B cell (primary cell): ENCODE measurements at regions of chr15 and their contacts with region 1.

Region 1: GRCh38 chr15:68578174-68578979 is 416 bp upstream of the CORO2B start:
- DNase-seq: peak; percentile 80
- ATAC-seq: peak; percentile 72
- H3K4me3 ChIP-seq: peak overlapping the region; percentile 54 to 77 (median 67)
- H3K4me3 Mint-ChIP-seq: peak overlapping the region; percentile 93
- H3K27ac ChIP-seq: peak overlapping the region; percentile 72 to 75
- H3K27ac Mint-ChIP-seq: peak overlapping the region; percentile 78
- H3K4me1 ChIP-seq: peaks cover 31 to 35% of the 10 kb centered on the region in 2 donors
- H3K4me1 Mint-ChIP-seq: peaks cover 44% of the 10 kb centered on the region
- H3K27me3 ChIP-seq: peaks cover 0 to 22% (median 3%) of the 10 kb centered on the region in 4 experiments
- H3K27me3 Mint-ChIP-seq: peaks cover 32% of the 10 kb centered on the region
- CTCF ChIP-seq: peak; percentile 49

Region 2: DNA sequence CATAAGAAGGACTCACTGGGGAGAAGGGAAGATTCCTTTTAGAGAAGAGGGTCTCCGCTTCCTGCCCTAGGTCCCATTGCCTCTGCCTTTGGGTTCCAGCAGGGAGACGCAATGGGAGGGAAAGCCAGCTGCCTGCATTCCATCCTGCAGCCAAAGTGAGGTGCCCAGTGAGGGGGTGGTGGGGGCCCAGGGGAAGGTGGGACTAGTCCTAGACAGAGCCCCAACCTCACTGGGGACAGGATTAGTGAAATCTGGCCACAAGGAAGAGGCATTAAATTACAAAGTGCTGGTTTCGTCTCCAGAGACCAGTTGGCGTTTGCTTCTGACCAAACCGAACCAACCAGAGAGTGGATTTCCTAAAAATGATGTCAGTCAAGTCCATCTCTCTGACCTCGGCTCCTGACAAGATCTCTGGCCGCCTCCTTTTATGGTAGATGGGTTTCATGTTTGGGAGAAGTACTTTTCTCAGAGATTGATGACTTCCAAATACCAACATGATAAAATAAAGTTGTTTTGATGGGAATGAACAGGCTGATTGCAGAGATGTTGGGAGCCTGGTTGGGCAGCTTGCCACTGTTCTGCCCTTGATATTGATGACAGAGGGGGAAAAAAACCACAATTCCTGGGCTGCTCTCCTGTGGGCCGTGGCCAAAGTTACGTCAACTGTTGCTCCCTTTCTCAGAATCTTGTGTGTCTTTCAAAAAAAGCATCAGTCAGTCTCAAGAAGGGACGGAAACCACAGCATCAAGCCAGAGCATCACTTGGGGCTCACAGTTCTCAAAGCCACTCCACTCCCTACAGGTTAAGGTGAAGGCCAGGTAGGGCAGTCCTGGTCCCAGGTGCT is 171.1 kb before region 1 on chr15:
- CTCF ChIA-PET with region 1: no interaction called
- POLR2A ChIA-PET with region 1: no interaction called
- intact Hi-C with region 1: no loop called
- DNase-seq: no peak
- ATAC-seq: no peak
- H3K4me3 ChIP-seq: no peak overlapping the region
- H3K4me3 Mint-ChIP-seq: no peak overlapping the region
- H3K27ac ChIP-seq: no peak overlapping the region
- H3K27ac Mint-ChIP-seq: no peak overlapping the region
- H3K4me1 ChIP-seq: no peaks in the 10 kb centered on the region
- H3K4me1 Mint-ChIP-seq: no peaks in the 10 kb centered on the region
- H3K27me3 ChIP-seq: no peaks in the 10 kb centered on the region
- H3K27me3 Mint-ChIP-seq: peaks cover 9% of the 10 kb centered on the region
- CTCF ChIP-seq: no peak

Region 3: DNA sequence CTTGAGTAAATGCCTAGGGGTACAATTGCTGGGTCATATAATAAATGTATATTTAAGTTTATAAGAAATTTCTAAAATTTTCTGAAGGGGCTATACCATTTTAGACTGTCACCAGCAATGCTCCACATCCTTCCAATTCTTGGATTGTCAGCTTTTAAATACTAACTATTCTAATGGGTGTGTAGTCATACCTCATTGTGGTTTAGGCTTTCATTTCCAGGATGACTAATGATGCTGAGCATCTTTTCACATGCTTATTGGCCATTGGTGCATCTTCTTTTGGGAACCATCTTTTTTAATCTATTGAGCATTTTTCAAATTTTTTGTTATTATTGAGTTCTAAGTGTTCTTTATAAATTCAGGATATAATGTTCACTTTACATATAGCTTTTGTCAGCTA is 52.1 kb before region 1 on chr15:
- CTCF ChIA-PET with region 1: no interaction called
- POLR2A ChIA-PET with region 1: no interaction called
- intact Hi-C with region 1: no loop called
- DNase-seq: no peak
- ATAC-seq: no peak
- H3K4me3 ChIP-seq: no peak overlapping the region
- H3K4me3 Mint-ChIP-seq: no peak overlapping the region
- H3K27ac ChIP-seq: no peak overlapping the region
- H3K27ac Mint-ChIP-seq: no peak overlapping the region
- H3K4me1 ChIP-seq: peaks cover 2 to 11% of the 10 kb centered on the region in 2 donors
- H3K4me1 Mint-ChIP-seq: peaks cover 12% of the 10 kb centered on the region
- H3K27me3 ChIP-seq: peaks cover 0 to 10% (median 2%) of the 10 kb centered on the region in 4 experiments
- H3K27me3 Mint-ChIP-seq: peaks cover 16% of the 10 kb centered on the region
- CTCF ChIP-seq: no peak

Region 4: GRCh38 chr15:68631601-68632051 is 53.2 kb after region 1 on chr15:
- CTCF ChIA-PET with region 1: interaction called, 13 read pairs
- POLR2A ChIA-PET with region 1: interaction called, 5 read pairs
- intact Hi-C with region 1: loop called (anchors 1 kb)
- DNase-seq: peak; percentile 90
- ATAC-seq: peak; percentile 81
- H3K4me3 ChIP-seq: no peak overlapping the region
- H3K4me3 Mint-ChIP-seq: peak overlapping the region; percentile 80
- H3K27ac ChIP-seq: peak overlapping the region; percentile 86 to 95
- H3K27ac Mint-ChIP-seq: peak overlapping the region; percentile 97
- H3K4me1 ChIP-seq: peaks cover 96 to 98% of the 10 kb centered on the region in 2 donors
- H3K4me1 Mint-ChIP-seq: peaks cover 98% of the 10 kb centered on the region
- H3K27me3 ChIP-seq: no peaks in the 10 kb centered on the region
- H3K27me3 Mint-ChIP-seq: peaks cover 9% of the 10 kb centered on the region
- CTCF ChIP-seq: peak; percentile 21

Region 5: GRCh38 chr15:69126054-69126469 is 547.7 kb after region 1 on chr15:
- CTCF ChIA-PET with region 1: no interaction called
- POLR2A ChIA-PET with region 1: no interaction called
- intact Hi-C with region 1: no loop called
- DNase-seq: no peak
- ATAC-seq: no peak
- H3K4me3 ChIP-seq: no peak overlapping the region
- H3K4me3 Mint-ChIP-seq: no peak overlapping the region
- H3K27ac ChIP-seq: no peak overlapping the region
- H3K27ac Mint-ChIP-seq: no peak overlapping the region
- H3K4me1 ChIP-seq: no peaks in the 10 kb centered on the region
- H3K4me1 Mint-ChIP-seq: no peaks in the 10 kb centered on the region
- H3K27me3 ChIP-seq: no peaks in the 10 kb centered on the region
- H3K27me3 Mint-ChIP-seq: no peaks in the 10 kb centered on the region
- CTCF ChIP-seq: no peak